MCF 10A (cell line): ENCODE measurements at regions of chr20 and their contacts with region 1.

Region 1: GRCh38 chr20:25065625-25066338 is 7.8 kb upstream of the ACSS1 start:
- DNase-seq: peak; percentile 59
- H3K4me3 Mint-ChIP-seq: no peak overlapping the region
- H3K27ac Mint-ChIP-seq: no peak overlapping the region
- H3K4me1 Mint-ChIP-seq: peaks cover 12% of the 10 kb centered on the region
- H3K27me3 Mint-ChIP-seq: peaks cover 68% of the 10 kb centered on the region
- CTCF ChIP-seq: peak; percentile 57

Region 2: DNA sequence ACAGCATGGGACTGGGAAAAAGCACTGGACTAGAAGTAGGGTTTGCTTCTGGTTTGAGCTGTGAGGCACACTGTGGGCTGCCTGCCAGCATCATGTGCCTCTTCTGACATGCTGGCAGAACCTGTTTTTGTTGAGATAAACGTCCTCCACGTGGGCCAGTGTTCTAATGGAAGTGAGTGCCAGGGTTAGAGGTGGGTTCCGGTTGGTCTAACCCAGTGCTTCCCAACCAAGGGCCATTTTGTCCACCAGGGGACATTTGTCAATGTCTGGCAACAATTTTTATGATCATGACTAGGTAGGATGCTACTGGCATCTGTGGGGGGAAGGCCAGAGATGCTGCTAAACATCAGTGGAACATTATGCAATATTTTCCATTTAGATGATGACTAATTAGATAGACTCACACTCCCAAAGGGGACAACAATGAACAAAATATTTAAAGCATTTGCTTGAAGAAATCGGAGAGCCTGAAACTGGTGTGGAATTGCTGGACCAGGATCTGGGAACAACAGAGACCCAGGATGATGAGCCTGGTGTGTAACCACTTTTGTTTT is 65.4 kb before region 1 on chr20:
- CTCF ChIA-PET with region 1: interaction called, 500 read pairs
- POLR2A ChIA-PET with region 1: interaction called, 144 read pairs
- intact Hi-C with region 1: loop called (anchors 1 kb)
- DNase-seq: peak; percentile 73
- H3K4me3 Mint-ChIP-seq: no peak overlapping the region
- H3K27ac Mint-ChIP-seq: peak overlapping the region; percentile 84
- H3K4me1 Mint-ChIP-seq: peaks cover 38% of the 10 kb centered on the region
- H3K27me3 Mint-ChIP-seq: peaks cover 12% of the 10 kb centered on the region
- CTCF ChIP-seq: no peak

Region 3: GRCh38 chr20:25017257-25018115 is 48.3 kb before region 1 on chr20:
- CTCF ChIA-PET with region 1: interaction called, 24 read pairs
- POLR2A ChIA-PET with region 1: interaction called, 4 read pairs
- intact Hi-C with region 1: no loop called
- DNase-seq: peak; percentile 87
- H3K4me3 Mint-ChIP-seq: no peak overlapping the region
- H3K27ac Mint-ChIP-seq: peak overlapping the region; percentile 27
- H3K4me1 Mint-ChIP-seq: peaks cover 15% of the 10 kb centered on the region
- H3K27me3 Mint-ChIP-seq: no peaks in the 10 kb centered on the region
- CTCF ChIP-seq: no peak

Region 4: DNA sequence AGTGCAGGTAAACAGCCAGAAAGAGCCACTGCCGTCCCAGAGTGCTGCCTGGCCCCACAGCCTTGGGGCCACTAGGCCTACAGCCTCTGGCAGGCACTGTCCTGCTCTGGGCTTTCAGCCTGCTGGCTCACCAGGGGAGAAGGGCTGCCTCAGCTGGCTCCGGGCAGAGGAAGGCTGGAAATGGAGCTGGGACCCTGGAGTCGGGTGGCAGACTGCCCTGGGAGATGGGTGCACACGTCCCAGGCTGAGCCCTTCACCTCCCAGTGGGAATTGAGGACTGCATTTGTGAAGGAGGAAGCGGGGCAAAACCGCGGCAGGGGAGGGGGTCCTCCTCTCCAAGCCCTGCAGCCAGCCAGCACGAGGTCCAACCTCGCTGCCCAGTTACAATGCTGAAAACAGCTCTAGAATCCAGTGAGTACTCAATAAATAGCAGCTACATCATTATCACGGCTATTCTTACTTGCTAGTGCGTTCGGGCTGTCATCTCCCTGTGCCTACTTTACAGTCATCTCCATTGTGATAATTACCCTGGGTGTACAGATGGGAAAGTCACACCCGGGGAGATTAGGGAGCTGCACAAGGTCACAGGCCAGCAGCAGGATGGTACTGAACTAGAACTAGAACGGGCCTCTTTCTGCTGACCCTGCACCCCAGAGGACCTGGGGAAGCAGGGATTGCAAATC is 21.0 kb before region 1 on chr20:
- CTCF ChIA-PET with region 1: interaction called, 12 read pairs
- POLR2A ChIA-PET with region 1: interaction called, 6 read pairs
- intact Hi-C with region 1: no loop called
- DNase-seq: no peak
- H3K4me3 Mint-ChIP-seq: no peak overlapping the region
- H3K27ac Mint-ChIP-seq: no peak overlapping the region
- H3K4me1 Mint-ChIP-seq: peaks cover 9% of the 10 kb centered on the region
- H3K27me3 Mint-ChIP-seq: peaks cover 45% of the 10 kb centered on the region
- CTCF ChIP-seq: no peak

Region 5: DNA sequence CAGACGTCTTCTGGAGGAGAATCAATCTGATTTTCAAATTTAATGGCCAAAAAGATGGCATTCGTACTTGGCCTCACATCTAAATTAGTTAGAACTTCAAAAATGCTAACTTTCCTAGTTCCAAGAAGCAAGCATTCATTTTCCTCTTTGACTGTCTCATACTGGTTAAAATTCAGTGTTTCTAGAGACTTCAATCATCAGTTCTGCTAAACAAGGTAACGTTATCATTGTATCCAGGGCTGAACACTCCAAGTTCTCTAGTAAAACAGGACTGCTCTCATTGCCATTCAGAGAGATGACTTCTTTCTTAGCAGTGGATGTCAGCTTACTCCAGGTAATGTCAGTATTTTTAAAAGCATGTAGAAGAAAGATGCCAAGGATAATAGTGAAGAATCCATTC is 95.1 kb after region 1 on chr20:
- CTCF ChIA-PET with region 1: no interaction called
- POLR2A ChIA-PET with region 1: no interaction called
- intact Hi-C with region 1: no loop called
- DNase-seq: no peak
- H3K4me3 Mint-ChIP-seq: no peak overlapping the region
- H3K27ac Mint-ChIP-seq: no peak overlapping the region
- H3K4me1 Mint-ChIP-seq: no peaks in the 10 kb centered on the region
- H3K27me3 Mint-ChIP-seq: no peaks in the 10 kb centered on the region
- CTCF ChIP-seq: no peak

Region 6: DNA sequence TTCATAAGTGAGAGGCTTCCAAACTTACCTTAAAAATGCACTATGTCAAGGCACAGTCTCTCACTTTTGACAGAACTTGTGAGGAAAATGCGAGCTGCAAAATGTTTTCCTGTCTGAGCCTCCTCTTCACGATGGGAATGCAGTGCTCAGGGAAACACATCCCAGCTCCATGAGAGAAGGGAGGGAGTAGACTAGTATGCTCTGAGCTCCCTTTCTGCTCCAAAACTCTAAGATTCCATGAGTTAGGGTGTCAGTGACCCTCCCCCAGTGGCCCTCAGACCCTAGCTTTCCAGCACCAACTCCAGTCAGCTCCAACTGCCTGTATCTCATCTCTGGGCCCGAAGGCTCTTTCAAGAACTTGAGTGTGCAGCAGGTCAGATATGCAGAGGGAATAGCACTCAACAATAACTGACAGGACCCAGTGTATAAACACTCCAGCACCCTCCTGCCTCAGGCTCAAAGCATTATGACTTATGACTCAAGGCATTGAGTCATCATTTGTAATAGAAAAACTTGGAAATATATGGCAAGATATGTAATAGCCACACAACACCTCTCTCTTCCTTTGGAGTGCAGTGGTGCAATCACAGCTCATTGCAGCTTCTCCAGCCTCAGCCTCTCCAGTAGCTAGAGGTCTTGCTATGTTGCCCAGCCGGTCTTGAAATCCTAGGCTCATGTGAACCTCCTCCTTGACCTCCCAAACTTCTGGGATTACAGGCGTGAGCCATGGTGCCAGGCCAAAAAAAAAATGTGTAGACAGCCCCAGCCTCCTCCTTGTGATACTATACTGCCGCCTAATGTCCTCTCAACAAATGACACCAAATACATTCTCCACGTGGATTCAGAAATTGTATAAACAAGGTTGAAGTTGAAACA is 113.0 kb after region 1 on chr20:
- CTCF ChIA-PET with region 1: interaction called, 44 read pairs
- POLR2A ChIA-PET with region 1: interaction called, 4 read pairs
- intact Hi-C with region 1: loop called (anchors 1 kb)
- DNase-seq: peak; percentile 96
- H3K4me3 Mint-ChIP-seq: no peak overlapping the region
- H3K27ac Mint-ChIP-seq: peak overlapping the region; percentile 0
- H3K4me1 Mint-ChIP-seq: peaks cover 27% of the 10 kb centered on the region
- H3K27me3 Mint-ChIP-seq: no peaks in the 10 kb centered on the region
- CTCF ChIP-seq: peak; percentile 77